Activated CD4-positive, alpha-beta T cell treated with anti-CD3 and anti-CD28 coated beads, Interleukin-2, amount 10 ng/mL, durations not matched to agents 24 days and 14 days (primary cell): ENCODE measurements at regions of chr11 and their contacts with region 1.

Region 1: GRCh38 chr11:118051611-118052461 is 25.0 kb upstream of the TMPRSS4 start:
- DNase-seq: peak; percentile 90
- H3K4me3 Mint-ChIP-seq: peak overlapping the region; percentile 69
- H3K27ac Mint-ChIP-seq: peak overlapping the region; percentile 94
- H3K4me1 Mint-ChIP-seq: peaks cover 57% of the 10 kb centered on the region
- H3K27me3 Mint-ChIP-seq: peaks cover 5% of the 10 kb centered on the region

Region 2: GRCh38 chr11:117807482-117808327 is 244.1 kb before region 1 on chr11:
- intact Hi-C with region 1: loop called (anchors 1 kb)
- DNase-seq: peak; percentile 92
- H3K4me3 Mint-ChIP-seq: no peak overlapping the region
- H3K27ac Mint-ChIP-seq: no peak overlapping the region
- H3K4me1 Mint-ChIP-seq: peaks cover 20% of the 10 kb centered on the region
- H3K27me3 Mint-ChIP-seq: peaks cover 5% of the 10 kb centered on the region

Region 3: GRCh38 chr11:117843666-117844484 is 208.0 kb before region 1 on chr11:
- intact Hi-C with region 1: loop called (anchors 1 kb)
- DNase-seq: peak; percentile 94
- H3K4me3 Mint-ChIP-seq: no peak overlapping the region
- H3K27ac Mint-ChIP-seq: no peak overlapping the region
- H3K4me1 Mint-ChIP-seq: no peaks in the 10 kb centered on the region
- H3K27me3 Mint-ChIP-seq: peaks cover 22% of the 10 kb centered on the region

Region 4: GRCh38 chr11:117932067-117932370 is 119.8 kb before region 1 on chr11:
- intact Hi-C with region 1: loop called (anchors 5 kb)
- DNase-seq: peak; percentile 69
- H3K4me3 Mint-ChIP-seq: peak overlapping the region; percentile 26
- H3K27ac Mint-ChIP-seq: peak overlapping the region; percentile 82
- H3K4me1 Mint-ChIP-seq: peaks cover 42% of the 10 kb centered on the region
- H3K27me3 Mint-ChIP-seq: peaks cover 7% of the 10 kb centered on the region

Region 5: GRCh38 chr11:117946842-117947526 is 104.9 kb before region 1 on chr11:
- intact Hi-C with region 1: loop called (anchors 1 kb)
- DNase-seq: peak; percentile 95
- H3K4me3 Mint-ChIP-seq: peak overlapping the region; percentile 4
- H3K27ac Mint-ChIP-seq: peak overlapping the region; percentile 67
- H3K4me1 Mint-ChIP-seq: peaks cover 79% of the 10 kb centered on the region
- H3K27me3 Mint-ChIP-seq: peaks cover 3% of the 10 kb centered on the region

Region 6: DNA sequence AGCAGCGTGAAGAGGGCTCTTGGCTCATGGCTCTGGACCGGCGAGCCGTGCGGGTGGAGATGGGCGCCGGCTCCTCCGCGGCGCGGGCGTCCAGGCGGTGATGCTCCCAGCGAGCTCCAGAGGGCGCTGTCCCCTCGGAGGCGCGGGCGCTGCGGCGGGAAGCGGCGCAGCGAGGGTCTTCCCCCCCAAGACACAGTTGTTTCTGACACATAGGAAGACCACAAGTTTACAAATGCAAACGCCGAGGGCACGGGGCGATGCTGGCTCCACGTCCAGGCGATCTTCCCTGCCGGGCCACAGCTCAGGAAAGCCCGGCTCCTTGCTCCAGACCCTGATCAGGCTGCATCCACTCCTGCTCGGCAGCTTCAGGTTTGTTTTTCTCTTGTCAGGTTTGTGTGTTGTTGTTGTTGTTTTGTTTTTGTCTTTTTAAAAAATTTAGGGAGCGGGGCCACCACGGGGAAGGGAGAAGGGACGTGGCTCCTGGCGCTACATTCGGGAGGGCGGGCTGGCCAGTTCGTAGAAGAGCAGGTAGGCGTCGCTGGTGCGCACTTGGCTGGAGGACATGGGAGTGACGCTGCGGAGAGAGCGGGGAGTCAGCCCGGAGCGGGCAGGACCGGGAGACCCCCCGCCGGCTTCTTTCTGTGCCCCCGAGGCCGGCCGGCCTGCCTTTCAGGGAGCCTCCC is 1304.7 kb after region 1 on chr11:
- intact Hi-C with region 1: no loop called
- DNase-seq: peak; percentile 92
- H3K4me3 Mint-ChIP-seq: peak overlapping the region; percentile 87
- H3K27ac Mint-ChIP-seq: peak overlapping the region; percentile 76
- H3K4me1 Mint-ChIP-seq: peaks cover 5% of the 10 kb centered on the region
- H3K27me3 Mint-ChIP-seq: peaks cover 39% of the 10 kb centered on the region